A549 (cell line): ENCODE measurements at regions of chr12 and their contacts with region 1.

Region 1: GRCh38 chr12:93419388-93420034 is 22.2 kb downstream of the UBE2N start:
- DNase-seq: peak; percentile 58 to 59
- ATAC-seq: peak in 1 of 2 experiments; percentile 79; a peak in 3 of 6 replicates
- H3K4me3 ChIP-seq: no peak overlapping the region
- H3K27ac ChIP-seq: no peak overlapping the region
- H3K4me1 ChIP-seq: peaks cover 27% of the 10 kb centered on the region; the same call in 2 of the 3 replicates
- CTCF ChIP-seq: peak; percentile 73
- EP300 ChIP-seq: no peak
- POLR2A ChIP-seq: no peak
- RAD21 ChIP-seq: peak; percentile 41 to 50; a peak in 3 of 5 replicates

Region 2: DNA sequence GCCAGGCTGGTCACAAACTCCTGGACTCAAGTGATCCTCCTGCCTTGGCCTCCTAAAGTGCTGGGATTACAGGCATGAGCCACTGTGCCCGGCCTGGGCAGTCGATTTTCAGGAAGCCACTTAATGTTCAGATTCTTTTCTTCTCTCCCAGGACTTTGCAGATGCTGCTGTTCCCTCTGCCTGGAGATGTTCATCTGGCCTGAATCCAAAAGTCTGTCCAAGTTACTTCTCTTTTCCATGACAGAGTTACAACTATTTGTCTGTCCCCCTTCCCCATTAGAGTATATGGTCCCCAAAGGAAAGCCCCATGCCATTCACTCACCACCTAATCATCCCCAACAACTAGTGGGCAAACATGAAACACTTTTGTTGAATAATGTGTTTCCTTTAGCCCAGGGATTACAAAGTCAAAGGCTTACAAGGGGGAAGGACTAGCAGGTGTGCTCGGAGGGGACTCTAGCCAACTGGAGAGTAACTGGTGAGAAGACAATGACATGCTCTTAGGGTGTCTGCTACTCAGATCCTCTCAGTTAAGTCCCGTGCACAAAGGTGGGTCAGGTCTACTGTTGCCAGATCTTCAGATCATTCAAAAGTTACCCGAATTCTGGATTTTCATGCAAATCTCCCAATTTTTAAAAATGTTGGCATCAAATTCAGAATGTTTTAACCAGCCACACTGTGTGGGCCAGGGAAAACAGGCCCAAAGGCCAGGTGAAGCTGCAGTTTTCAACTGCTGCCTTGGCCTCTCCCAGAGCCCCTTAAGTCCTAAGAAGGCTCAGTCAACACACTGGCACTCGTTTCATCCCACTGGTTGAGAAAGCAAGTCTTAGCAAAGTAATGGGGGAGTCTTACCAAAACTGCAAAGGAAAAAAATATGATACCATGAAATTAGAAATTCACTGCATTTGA is 12.2 kb before region 1 on chr12:
- CTCF ChIA-PET with region 1: interaction called, 15 read pairs
- POLR2A ChIA-PET with region 1: no interaction called
- DNase-seq: no peak
- ATAC-seq: 0 out of 6 replicates have a peak, but pooled peaks of 1 of the 2 experiments have one; percentile 16
- H3K4me3 ChIP-seq: no peak overlapping the region
- H3K27ac ChIP-seq: no peak overlapping the region
- H3K4me1 ChIP-seq: no peaks in the 10 kb centered on the region
- CTCF ChIP-seq: no peak
- EP300 ChIP-seq: no peak
- POLR2A ChIP-seq: no peak
- RAD21 ChIP-seq: no peak

Region 3: DNA sequence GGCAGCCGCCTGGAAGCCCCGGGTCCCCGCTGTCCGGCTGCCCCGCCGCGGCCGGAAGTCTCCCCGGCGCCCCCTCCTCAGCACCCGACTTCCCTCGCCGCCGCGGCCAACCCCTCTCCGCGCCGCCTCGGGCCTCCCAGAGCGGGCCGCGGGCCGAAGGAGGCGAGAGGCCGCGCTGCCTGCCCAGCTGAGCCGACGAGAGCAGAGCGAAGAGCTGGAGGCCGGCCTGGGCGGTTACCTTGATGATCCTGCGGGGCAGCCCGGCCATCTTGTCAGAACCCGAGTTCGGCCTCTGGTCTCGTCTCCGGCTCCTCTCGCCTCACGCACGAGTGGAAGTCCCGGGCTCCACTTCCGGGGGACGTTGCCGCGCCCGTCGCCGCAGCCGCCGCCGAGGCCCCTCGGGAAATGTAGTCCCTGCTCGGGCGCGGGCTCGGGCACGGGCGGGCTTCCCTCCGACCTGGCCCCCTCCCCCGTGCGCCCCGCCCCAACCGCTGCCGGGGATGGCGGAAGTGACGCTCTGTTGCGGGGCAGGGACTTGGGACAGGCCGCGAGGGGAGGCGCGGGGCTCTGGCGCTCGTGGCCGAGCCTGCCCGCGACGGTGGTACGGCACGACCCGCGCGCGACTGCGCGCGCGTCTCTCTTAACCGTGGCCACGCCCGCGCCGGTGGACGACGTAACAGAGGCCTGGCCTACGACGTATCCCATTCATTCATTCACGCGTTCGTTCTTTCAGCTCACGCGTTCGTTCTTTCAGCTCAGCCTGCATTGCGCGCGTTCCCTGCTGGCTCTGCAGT is 22.3 kb after region 1 on chr12 and contains the start of gene UBE2N:
- CTCF ChIA-PET with region 1: interaction called, 13 read pairs
- POLR2A ChIA-PET with region 1: no interaction called
- DNase-seq: peak; percentile 88 to 97
- ATAC-seq: peak; percentile 93 to 94
- H3K4me3 ChIP-seq: peak within 1 kb of the TSS; percentile 99
- H3K27ac ChIP-seq: peak within 1 kb of the TSS; percentile 94 to 98
- H3K4me1 ChIP-seq: peaks cover 32% of the 10 kb centered on the region
- CTCF ChIP-seq: no peak
- EP300 ChIP-seq: no peak
- POLR2A ChIP-seq: peak; percentile 79
- RAD21 ChIP-seq: no peak
- polyA plus RNA-seq, gene UBE2N: 160 and 187 TPM in 2 replicates

Region 4: DNA sequence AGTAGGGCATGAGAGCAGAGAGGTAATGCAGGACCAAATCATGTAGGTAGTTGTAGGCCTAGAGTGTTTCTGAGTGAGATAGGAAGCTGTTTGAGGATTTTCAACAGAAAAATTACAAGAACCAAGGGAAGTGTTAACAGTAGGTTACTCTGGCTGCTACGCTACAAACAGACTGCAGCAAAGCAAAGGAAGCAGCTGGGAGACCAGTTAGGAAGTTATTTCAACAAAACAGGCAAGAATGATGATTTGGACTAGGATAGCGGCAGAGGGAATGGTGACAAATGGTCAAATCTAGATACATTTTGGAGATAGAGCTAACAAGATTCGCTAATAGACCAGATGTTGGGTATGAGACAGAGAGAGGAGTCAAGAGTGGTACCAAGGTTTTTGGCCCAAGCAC is 74.6 kb after region 1 on chr12:
- CTCF ChIA-PET with region 1: no interaction called
- POLR2A ChIA-PET with region 1: no interaction called
- DNase-seq: no peak
- ATAC-seq: no peak
- H3K4me3 ChIP-seq: no peak overlapping the region
- H3K27ac ChIP-seq: no peak overlapping the region
- H3K4me1 ChIP-seq: no peaks in the 10 kb centered on the region
- CTCF ChIP-seq: no peak
- EP300 ChIP-seq: no peak
- POLR2A ChIP-seq: no peak
- RAD21 ChIP-seq: no peak